CD4-positive, alpha-beta T cell (primary cell): ENCODE measurements at regions of chr3 and their contacts with region 1.

Region 1: GRCh38 chr3:151203051-151203420 is at the start of gene GPR171:
- DNase-seq: peak; percentile 42 to 89 (median 60)
- ATAC-seq: peak; percentile 88
- H3K4me3 ChIP-seq: peak within 1 kb of the TSS; percentile 61
- H3K4me3 Mint-ChIP-seq: peak within 1 kb of the TSS; percentile 68
- H3K27ac ChIP-seq: peak within 1 kb of the TSS; percentile 63 to 78
- H3K27ac Mint-ChIP-seq: peak within 1 kb of the TSS; percentile 85
- H3K4me1 ChIP-seq: peaks cover 38% of the 10 kb centered on the region
- H3K4me1 Mint-ChIP-seq: peaks cover 78% of the 10 kb centered on the region
- H3K27me3 ChIP-seq: no peaks in the 10 kb centered on the region
- H3K27me3 Mint-ChIP-seq: no peaks in the 10 kb centered on the region
- CTCF ChIP-seq: no peak
- total RNA-seq, gene GPR171: 9.7 to 16.7 TPM

Region 2: DNA sequence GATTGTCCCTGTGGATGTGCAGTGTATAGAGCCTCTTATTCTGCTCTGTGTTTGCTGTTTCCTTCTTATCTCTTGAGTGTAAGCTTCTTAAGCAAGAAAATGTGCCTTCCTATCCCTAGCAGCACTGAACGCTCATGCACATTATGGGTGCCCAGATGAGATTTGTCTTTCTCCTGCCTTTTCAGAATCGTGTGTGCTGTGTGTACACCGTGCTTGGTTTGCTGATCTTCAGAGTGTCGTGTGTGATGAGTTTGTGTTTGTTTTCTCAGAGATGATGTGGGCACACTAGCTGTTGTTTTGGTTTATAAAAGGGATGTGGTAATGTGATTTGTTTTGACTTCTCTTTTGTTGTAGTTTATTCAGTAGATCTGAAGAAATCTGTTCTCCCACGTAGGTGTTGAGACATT is 19.8 kb before region 1 on chr3:
- CTCF ChIA-PET with region 1: no interaction called
- POLR2A ChIA-PET with region 1: interaction called, 84 read pairs
- intact Hi-C with region 1: no loop called
- DNase-seq: peak in 4 of 14 experiments; percentile 26 to 62 (median 38)
- ATAC-seq: peak; percentile 87
- H3K4me3 ChIP-seq: peak overlapping the region; percentile 17
- H3K4me3 Mint-ChIP-seq: peak overlapping the region; percentile 64
- H3K27ac ChIP-seq: peak overlapping the region in 1 of 2 donors; percentile 33
- H3K27ac Mint-ChIP-seq: peak overlapping the region; percentile 69
- H3K4me1 ChIP-seq: peaks cover 20% of the 10 kb centered on the region
- H3K4me1 Mint-ChIP-seq: peaks cover 31% of the 10 kb centered on the region
- H3K27me3 ChIP-seq: no peaks in the 10 kb centered on the region
- H3K27me3 Mint-ChIP-seq: no peaks in the 10 kb centered on the region
- CTCF ChIP-seq: no peak

Region 3: DNA sequence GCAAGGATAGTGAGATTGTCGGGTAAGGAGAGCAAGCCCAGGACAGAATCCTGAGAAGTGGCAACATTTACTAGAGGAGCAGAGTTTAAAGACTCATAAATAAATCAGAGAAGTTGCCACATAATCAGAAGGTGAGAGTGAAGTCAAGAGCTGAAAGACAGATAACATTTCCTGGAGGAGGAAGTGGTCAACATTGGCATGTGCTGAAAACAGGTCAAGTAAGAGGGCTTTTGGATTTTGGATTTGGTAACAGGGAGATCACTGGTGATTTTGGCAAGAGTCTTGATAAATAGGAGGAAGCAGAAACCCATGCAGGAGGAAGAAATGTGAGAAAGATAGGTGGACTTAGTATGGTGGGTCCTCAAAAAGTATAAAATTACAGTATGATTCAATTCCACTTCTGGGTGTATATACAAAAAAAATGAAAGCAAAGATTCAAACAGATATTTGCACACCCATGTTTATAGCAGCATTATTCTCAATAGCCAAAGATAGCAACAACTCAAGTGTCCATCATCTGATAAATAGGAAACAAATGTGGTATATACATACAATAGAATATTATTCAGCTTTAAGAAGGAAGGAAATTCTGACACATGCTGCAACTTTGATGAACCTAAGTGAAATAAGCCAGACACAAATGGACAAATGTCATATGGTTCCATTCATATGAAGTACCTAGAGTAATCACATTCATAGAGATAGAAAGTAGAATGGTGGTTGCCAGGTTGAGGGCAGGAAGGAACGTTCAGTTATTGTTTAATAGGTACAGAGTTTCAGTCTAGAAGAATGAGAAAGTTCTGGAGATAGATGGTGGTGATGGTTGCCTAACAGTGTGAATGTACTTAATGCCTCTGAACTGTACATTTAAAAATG is 1038.3 kb after region 1 on chr3:
- CTCF ChIA-PET with region 1: no interaction called
- POLR2A ChIA-PET with region 1: no interaction called
- intact Hi-C with region 1: no loop called
- DNase-seq: peak in 3 of 14 experiments; percentile 41 to 66 (median 45)
- ATAC-seq: no peak
- H3K4me3 ChIP-seq: no peak overlapping the region
- H3K4me3 Mint-ChIP-seq: peak overlapping the region; percentile 92
- H3K27ac ChIP-seq: peak overlapping the region; percentile 68 to 76
- H3K27ac Mint-ChIP-seq: peak overlapping the region; percentile 79
- H3K4me1 ChIP-seq: peaks cover 23% of the 10 kb centered on the region
- H3K4me1 Mint-ChIP-seq: peaks cover 78% of the 10 kb centered on the region
- H3K27me3 ChIP-seq: no peaks in the 10 kb centered on the region
- H3K27me3 Mint-ChIP-seq: no peaks in the 10 kb centered on the region
- CTCF ChIP-seq: no peak